Activated T-helper 2 cell treated with anti-CD3 and anti-CD28 coated beads, Interferon-gamma antibody, Interleukin-2, Interleukin-4, amounts not matched to agents 10 μg/mL and 5 μg/mL and 100 μg/mL, durations not matched to agents 14 hours and 24 hours and 36 hours (primary cell): ENCODE measurements at regions of chr12 and their contacts with region 1.

Region 1: GRCh38 chr12:47079468-47079980 is at the starts of genes AMIGO2 and PCED1B:
- DNase-seq: peak; percentile 57
- H3K4me3 Mint-ChIP-seq: peak within 1 kb of the TSS; percentile 97
- H3K27ac Mint-ChIP-seq: peak within 1 kb of the TSS; percentile 95
- H3K4me1 Mint-ChIP-seq: peaks cover 63% of the 10 kb centered on the region
- H3K27me3 Mint-ChIP-seq: no peaks in the 10 kb centered on the region
- total RNA-seq, gene AMIGO2: 10.7 and 11.1 TPM in 2 replicates
- total RNA-seq, gene PCED1B: 49.9 and 50.4 TPM in 2 replicates

Region 2: GRCh38 chr12:47147739-47148138 is 68.2 kb after region 1 on chr12:
- intact Hi-C with region 1: loop called (anchors 5 kb)
- DNase-seq: no peak
- H3K4me3 Mint-ChIP-seq: no peak overlapping the region
- H3K27ac Mint-ChIP-seq: no peak overlapping the region
- H3K4me1 Mint-ChIP-seq: peaks cover 30% of the 10 kb centered on the region
- H3K27me3 Mint-ChIP-seq: no peaks in the 10 kb centered on the region

Region 3: GRCh38 chr12:47276621-47277309 is 197.2 kb after region 1 on chr12:
- intact Hi-C with region 1: loop called (anchors 5 kb)
- DNase-seq: peak; percentile 65
- H3K4me3 Mint-ChIP-seq: peak overlapping the region; percentile 48
- H3K27ac Mint-ChIP-seq: peak overlapping the region; percentile 81
- H3K4me1 Mint-ChIP-seq: peaks cover 74% of the 10 kb centered on the region
- H3K27me3 Mint-ChIP-seq: no peaks in the 10 kb centered on the region

Region 4: GRCh38 chr12:47307680-47308399 is 228.3 kb after region 1 on chr12:
- intact Hi-C with region 1: loop called (anchors 2 kb)
- DNase-seq: peak; percentile 46
- H3K4me3 Mint-ChIP-seq: peak overlapping the region; percentile 89
- H3K27ac Mint-ChIP-seq: peak overlapping the region; percentile 91
- H3K4me1 Mint-ChIP-seq: peaks cover 47% of the 10 kb centered on the region
- H3K27me3 Mint-ChIP-seq: no peaks in the 10 kb centered on the region